ENCODE measurements at regions of chr18 and their contacts with region 1.

Region 1: DNA sequence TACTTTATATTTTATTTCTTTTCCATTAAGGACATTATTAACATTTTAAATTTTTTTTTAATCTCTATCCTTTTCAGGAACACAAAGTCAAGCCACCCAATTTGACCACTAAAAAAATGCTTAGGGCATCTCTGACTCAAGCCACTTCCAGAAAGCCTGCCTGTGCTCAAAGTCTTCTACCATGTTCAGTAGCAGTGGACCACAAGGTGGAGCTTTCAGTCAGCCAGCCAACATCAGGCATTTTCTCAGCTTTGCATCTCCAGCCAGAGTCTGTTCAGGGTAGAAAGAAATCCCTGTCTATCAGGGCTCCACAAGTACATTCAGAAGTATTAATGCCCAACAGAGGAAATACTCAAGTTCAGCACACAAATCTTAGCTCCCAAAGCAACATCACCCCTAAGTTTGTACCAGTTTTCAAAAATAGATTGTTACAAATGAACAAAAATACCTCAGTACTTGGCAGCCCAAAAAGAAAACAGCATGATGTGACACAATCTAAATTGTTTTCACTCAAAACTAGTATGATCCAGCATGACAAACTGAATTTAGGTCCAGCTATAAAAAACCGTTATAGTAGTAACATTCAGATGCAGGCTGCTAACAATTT is 37.6 kb downstream of the C18orf63 start:
- DNase-seq: peak; percentile 18
- H3K4me3 ChIP-seq: no peak overlapping the region
- H3K27ac ChIP-seq: no peak overlapping the region
- H3K27me3 ChIP-seq: peaks cover 5% of the 10 kb centered on the region
- CTCF ChIP-seq: peak; percentile 86

Region 2: GRCh38 chr18:74006143-74006542 is 347.1 kb before region 1 on chr18:
- CTCF ChIA-PET with region 1: no interaction called
- POLR2A ChIA-PET with region 1: no interaction called
- DNase-seq: no peak
- H3K4me3 ChIP-seq: no peak overlapping the region
- H3K27ac ChIP-seq: no peak overlapping the region
- H3K27me3 ChIP-seq: peaks cover 11% of the 10 kb centered on the region
- CTCF ChIP-seq: no peak

Region 3: DNA sequence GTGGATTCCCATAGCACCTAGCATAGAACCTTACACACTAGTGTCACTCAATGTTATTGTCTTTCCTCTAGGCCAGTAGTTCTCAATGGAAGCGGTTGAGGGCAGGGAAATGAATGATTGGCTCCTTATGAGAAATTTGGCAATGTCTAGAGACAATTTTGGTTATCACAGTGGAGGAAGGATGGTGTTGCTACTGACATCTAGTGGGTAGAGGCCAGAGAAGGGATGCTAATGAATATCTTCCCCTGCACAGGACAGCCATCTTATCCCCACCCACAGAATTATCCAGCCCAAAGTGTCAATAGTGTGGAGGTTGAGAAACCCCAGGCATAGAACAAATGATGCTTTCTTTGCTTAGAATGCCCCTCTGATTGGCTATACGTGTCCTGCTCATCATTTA is 21.9 kb before region 1 on chr18:
- CTCF ChIA-PET with region 1: no interaction called
- POLR2A ChIA-PET with region 1: no interaction called
- DNase-seq: peak; percentile 13
- H3K4me3 ChIP-seq: no peak overlapping the region
- H3K27ac ChIP-seq: no peak overlapping the region
- H3K27me3 ChIP-seq: no peaks in the 10 kb centered on the region
- CTCF ChIP-seq: peak; percentile 63

Region 4: GRCh38 chr18:74370115-74370514 is 16.8 kb after region 1 on chr18:
- CTCF ChIA-PET with region 1: interaction called, 14 read pairs
- POLR2A ChIA-PET with region 1: no interaction called
- DNase-seq: no peak
- H3K4me3 ChIP-seq: no peak overlapping the region
- H3K27ac ChIP-seq: no peak overlapping the region
- H3K27me3 ChIP-seq: peaks cover 17% of the 10 kb centered on the region
- CTCF ChIP-seq: no peak

Region 5: GRCh38 chr18:74412116-74412880 is 59.0 kb after region 1 on chr18:
- CTCF ChIA-PET with region 1: no interaction called
- POLR2A ChIA-PET with region 1: no interaction called
- DNase-seq: no peak
- H3K4me3 ChIP-seq: no peak overlapping the region
- H3K27ac ChIP-seq: no peak overlapping the region
- H3K27me3 ChIP-seq: peaks cover 16% of the 10 kb centered on the region
- CTCF ChIP-seq: no peak

Region 6: DNA sequence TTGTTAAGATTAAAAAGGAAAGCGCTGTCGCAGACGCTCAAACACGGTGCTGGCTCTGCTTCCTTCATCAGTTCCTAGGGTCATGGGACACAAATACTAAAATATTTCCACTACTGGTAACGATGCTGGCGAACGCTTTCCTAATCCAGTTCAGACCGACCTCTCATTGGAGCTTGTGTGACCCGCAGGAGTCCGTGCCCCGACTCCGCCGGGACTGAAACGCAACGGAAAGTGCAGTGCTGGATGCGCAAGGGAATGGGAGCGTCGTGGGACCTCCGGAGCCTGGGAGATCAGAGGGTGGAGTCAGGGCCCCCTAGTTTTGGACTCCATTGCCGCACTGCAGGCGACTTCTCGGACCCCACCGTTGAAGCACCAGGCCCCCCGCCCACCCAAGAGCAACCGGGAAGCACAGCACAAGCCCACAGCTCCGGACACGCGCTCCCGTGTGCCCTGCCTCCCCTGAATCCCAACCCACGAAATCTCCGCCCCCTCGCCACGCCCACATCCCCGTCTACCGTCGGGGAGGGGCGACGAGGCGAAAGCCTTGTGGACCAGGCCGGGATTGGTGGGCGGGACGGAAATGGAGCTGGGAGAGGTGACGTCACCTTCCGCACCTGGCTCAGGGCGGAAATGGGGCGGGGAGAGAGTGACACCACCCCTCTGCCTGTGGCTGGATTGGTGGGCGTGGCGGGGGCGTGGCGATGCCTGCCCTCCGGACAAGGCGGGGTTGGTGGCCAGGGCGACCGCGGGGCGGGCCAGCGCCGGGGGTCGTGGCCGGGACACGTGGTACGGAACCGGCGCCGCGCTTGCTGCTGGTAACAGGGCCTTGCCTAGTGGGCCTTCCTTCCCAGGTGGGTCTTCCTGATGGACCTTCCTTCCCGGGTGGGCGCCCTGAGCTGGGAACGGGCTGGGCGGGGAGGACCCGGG is 142.6 kb after region 1 on chr18 and contains the start of gene CNDP2:
- CTCF ChIA-PET with region 1: interaction called, 25 read pairs
- POLR2A ChIA-PET with region 1: no interaction called
- DNase-seq: peak; percentile 95
- H3K4me3 ChIP-seq: peak within 1 kb of the TSS; percentile 93
- H3K27ac ChIP-seq: peak within 1 kb of the TSS; percentile 52
- H3K27me3 ChIP-seq: peaks cover 7% of the 10 kb centered on the region
- CTCF ChIP-seq: no peak
- polyA plus RNA-seq, gene CNDP2: 74.1 and 74.2 TPM in 2 replicates

Measured in AG04450 (cell line).